Heart left ventricle (tissue), 16 donors: ENCODE measurements at regions of chr2 and their contacts with region 1.

Region 1: GRCh38 chr2:34096562-34097171 is 497.6 kb upstream of the FAM98A start:
- DNase-seq: peak in 3 of 5 donors; percentile 22
- ATAC-seq: peak in 2 of 4 donors; percentile 49
- H3K4me3 ChIP-seq: no peak overlapping the region
- H3K27ac ChIP-seq: no peak overlapping the region
- H3K4me1 ChIP-seq: no peaks in the 10 kb centered on the region
- H3K27me3 ChIP-seq: no peaks in the 10 kb centered on the region
- CTCF ChIP-seq: peak; percentile 62 to 84 (median 76)
- POLR2A ChIP-seq: no peak

Region 2: DNA sequence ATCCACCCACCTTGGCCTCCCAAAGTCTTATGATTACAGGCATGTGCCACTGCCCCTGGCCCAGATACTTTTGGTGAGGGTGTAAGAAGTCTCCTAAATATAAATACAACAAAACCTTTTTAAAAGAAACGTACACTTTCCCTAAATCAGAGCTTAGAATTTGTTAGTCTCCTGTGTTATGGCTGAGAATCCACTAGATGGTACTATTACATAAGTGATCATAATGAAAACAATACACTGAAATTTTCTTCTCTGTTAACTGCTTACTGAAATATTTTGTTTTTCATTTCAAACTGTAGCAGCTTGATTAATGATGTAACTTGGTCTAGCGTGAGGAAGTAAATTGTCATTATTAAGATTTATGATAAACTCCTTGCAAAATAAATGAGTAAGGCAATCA is 422.7 kb before region 1 on chr2:
- intact Hi-C with region 1: loop called in 2 of 10 experiments (anchors 10 kb)
- DNase-seq: no peak
- ATAC-seq: no peak
- H3K4me3 ChIP-seq: no peak overlapping the region
- H3K27ac ChIP-seq: no peak overlapping the region
- H3K4me1 ChIP-seq: no peaks in the 10 kb centered on the region
- H3K27me3 ChIP-seq: no peaks in the 10 kb centered on the region
- CTCF ChIP-seq: peak; percentile 13 to 64 (median 52)
- POLR2A ChIP-seq: no peak

Region 3: DNA sequence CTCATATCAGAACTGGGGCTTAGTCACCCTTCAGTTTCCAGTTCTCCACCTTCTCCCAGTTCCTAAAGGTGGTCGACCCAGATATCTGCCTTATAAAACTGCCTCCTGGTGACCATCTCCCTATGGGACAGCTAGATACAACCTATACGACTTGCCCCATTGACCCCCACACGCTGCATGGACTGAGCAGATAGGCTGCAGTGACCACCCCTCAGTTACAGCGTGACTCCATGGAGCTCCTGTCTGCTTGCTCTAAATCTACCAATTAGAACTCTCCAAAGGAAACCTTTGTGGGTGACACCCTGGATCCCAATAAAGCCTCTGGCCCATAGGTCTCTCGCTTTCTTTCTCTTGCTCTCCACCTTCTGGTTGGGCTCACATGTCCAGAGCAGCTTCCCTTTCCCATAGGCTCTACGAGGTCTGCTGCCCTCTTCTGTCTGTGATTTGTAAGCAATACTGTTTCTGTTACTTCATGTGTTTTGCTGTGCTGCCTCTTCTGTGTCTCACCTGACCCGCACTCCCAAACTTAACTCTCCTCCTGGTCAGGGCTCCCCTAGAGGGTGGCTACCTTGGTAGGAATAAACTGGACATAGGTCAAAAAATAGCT is 473.7 kb after region 1 on chr2:
- intact Hi-C with region 1: loop called in 1 of 10 experiments (anchors 2 kb)
- DNase-seq: peak in 1 of 5 donors; percentile 28
- ATAC-seq: peak in 1 of 4 donors; percentile 61
- H3K4me3 ChIP-seq: no peak overlapping the region
- H3K27ac ChIP-seq: no peak overlapping the region
- H3K4me1 ChIP-seq: no peaks in the 10 kb centered on the region
- H3K27me3 ChIP-seq: no peaks in the 10 kb centered on the region
- CTCF ChIP-seq: peak in 5 of 12 donors; percentile 13 to 41 (median 15)
- POLR2A ChIP-seq: no peak

Region 4: DNA sequence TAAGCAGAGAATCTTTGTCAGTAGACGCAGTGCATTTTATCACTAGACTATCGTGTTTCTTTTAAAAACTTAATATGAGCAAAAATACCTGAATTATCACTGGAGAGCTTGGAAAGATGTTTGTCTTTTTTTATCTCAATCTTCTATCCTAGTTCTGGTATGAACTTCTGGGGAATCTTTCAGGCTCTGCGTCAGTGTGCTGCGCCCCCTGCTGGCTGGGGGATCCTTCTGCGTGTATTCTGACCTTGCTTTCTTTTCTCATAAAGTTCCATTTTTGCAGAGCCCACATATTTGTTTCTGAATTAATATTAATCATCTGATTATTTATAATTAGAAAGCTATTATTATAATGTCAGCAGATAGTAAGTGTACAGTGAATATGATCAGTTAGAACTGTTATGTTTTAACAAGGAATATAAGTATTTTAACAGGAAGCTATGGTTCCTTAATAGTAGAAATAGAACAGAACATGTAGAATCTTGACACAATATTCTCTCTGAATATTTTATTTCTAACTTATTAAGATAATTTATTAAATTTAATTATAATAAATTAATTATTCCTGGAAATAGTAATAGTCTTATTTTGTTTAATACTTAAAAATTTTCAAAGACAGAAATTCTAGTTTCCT is 1313.9 kb after region 1 on chr2:
- intact Hi-C with region 1: loop called in 9 of 10 experiments (anchors 2 to 5 kb)
- DNase-seq: peak; percentile 21 to 67 (median 29)
- ATAC-seq: no peak
- H3K4me3 ChIP-seq: no peak overlapping the region
- H3K27ac ChIP-seq: no peak overlapping the region
- H3K4me1 ChIP-seq: no peaks in the 10 kb centered on the region
- H3K27me3 ChIP-seq: no peaks in the 10 kb centered on the region
- CTCF ChIP-seq: peak; percentile 72 to 93 (median 86)
- POLR2A ChIP-seq: no peak